PC-3 (cell line): ENCODE measurements at regions of chr14 and their contacts with region 1.

Region 1: GRCh38 chr14:24093901-24094761 is at the start of gene PCK2:
- DNase-seq: peak; percentile 84
- ATAC-seq: peak; percentile 88
- H3K4me3 ChIP-seq: peak within 1 kb of the TSS; percentile 83
- H3K27ac ChIP-seq: peak within 1 kb of the TSS; percentile 23
- H3K4me1 ChIP-seq: peaks cover 9% of the 10 kb centered on the region
- H3K27me3 ChIP-seq: no peaks in the 10 kb centered on the region
- CTCF ChIP-seq: no peak
- total RNA-seq, gene PCK2: 10.0 and 11.6 TPM in 2 replicates

Region 2: DNA sequence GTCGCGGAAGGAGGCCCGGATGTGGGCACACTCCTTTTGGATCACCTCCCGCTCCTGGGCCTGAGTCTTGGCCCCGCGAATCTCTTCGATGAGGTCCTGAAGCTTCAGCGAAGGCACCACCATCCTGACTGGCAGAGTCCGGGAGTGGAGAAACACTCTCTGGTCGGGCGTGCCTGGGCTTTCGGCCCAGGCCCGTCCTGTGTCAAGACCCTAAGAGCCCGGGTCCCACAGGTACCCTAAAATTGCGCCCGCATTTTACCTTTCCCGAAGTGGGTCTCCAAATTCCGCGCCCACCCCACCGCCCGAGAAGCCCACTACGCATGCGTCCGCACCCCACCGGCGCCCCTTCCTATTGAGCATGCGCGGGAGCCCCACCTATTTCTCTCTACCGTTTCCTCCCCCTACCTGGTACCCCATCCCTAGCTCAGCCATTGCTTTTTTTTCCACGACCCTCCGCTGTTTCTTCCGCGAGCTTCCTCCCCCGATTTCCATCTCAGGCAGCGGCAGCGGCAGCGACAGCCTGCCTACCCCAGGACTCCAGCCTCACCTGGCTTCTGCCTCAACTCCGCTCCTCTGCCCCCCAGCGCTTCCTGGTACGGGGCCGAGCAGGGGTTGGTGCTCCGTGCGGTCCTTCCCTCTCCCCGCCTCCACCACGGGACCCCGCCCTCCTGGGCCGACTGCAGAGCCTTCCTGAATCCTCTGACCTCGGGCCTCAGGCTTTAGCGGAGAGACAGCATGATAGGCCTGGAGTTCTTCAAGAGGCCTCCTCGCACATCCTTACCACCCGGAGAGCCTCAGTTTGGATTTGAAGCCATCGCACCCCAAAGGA is 526.7 kb before region 1 on chr14 and contains the start of gene AP1G2:
- CTCF ChIA-PET with region 1: no interaction called
- POLR2A ChIA-PET with region 1: interaction called, 26 read pairs
- intact Hi-C with region 1: no loop called
- DNase-seq: peak; percentile 78
- ATAC-seq: peak; percentile 70
- H3K4me3 ChIP-seq: peak within 1 kb of the TSS; percentile 81
- H3K27ac ChIP-seq: peak within 1 kb of the TSS; percentile 45
- H3K4me1 ChIP-seq: peaks cover 20% of the 10 kb centered on the region
- H3K27me3 ChIP-seq: no peaks in the 10 kb centered on the region
- CTCF ChIP-seq: no peak
- total RNA-seq, gene AP1G2: 69.7 and 71.7 TPM in 2 replicates

Region 3: DNA sequence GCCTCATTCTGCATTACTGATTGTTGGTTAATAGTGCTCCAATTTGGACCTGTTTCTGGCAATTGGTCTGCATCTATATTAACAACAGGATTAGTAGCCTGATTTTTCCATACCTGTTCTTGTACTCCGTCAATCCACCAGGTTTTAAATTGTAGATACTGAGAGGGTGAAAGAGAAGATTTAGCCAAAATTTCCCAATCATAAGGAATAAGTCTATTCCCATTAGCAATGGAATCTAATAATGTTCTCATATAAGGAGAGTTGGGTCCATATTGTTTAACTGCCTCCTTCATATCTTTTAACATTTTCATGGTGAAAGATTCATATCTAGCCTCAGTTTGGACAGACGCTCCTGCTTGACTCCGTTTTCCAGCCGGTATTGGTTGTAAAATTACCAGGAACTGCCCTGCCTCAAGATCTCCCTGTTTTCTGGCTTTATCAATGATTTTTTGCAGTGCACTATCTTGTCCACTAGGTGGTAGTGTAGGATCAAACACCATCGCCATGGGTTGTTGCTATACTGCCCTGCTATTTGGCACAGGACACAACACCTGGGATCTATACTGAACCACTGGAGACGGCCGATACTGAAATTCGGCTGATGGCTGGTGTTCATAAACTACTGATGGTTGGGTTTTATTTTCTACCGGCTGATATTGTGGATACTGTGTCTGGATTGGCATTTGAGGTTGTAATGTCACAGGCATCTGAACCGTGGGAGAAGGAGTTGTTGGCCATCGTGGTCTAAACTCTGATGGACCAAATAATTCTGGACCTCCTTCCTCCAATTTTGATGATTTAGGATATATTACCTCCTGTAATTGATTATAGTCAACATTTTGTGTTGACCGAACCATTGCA is 80.2 kb before region 1 on chr14:
- CTCF ChIA-PET with region 1: no interaction called
- POLR2A ChIA-PET with region 1: no interaction called
- intact Hi-C with region 1: loop called (anchors 2 kb)
- DNase-seq: peak; percentile 89
- ATAC-seq: peak; percentile 95
- H3K4me3 ChIP-seq: no peak overlapping the region
- H3K27ac ChIP-seq: no peak overlapping the region
- H3K4me1 ChIP-seq: no peaks in the 10 kb centered on the region
- H3K27me3 ChIP-seq: no peaks in the 10 kb centered on the region
- CTCF ChIP-seq: peak; percentile 83

Region 4: DNA sequence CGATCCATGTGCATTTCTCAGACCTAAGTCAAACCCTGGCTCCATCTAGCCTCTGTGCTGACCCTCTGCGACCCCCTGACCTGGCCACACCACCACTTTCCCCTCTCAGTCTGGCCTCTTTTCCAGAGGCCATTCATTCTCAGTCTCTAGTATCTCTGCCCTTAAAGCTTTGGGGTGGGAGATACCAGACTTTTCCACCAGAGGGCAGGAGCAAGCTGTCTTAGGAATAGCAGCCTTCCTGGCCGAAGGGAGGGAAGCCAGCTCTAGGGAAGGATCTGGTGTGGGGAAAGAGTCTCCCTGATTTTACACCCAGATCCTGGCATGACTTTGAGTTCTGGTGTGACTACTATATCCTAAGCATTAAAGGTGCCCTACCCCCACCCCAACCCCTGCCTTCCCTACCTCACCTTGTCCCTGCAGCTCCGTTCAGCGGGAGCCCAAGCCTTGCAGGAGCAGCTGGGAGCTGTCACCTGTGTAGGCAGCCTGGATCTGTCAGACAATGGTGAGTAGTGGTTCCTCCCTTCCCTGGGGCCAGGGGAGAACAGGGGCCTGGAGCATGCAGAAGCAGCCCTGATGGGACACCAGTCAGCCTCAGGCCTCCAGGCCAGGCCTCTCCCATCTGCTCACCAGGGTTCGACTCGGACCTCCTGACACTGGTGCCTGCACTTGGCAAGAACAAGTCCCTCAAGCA is 35.7 kb before region 1 on chr14:
- CTCF ChIA-PET with region 1: interaction called, 22 read pairs
- POLR2A ChIA-PET with region 1: interaction called, 5 read pairs
- intact Hi-C with region 1: loop called (anchors 1 kb)
- DNase-seq: peak; percentile 84
- ATAC-seq: peak; percentile 94
- H3K4me3 ChIP-seq: no peak overlapping the region
- H3K27ac ChIP-seq: no peak overlapping the region
- H3K4me1 ChIP-seq: no peaks in the 10 kb centered on the region
- H3K27me3 ChIP-seq: 0 out of 2 replicates have a peak, but pooled peaks cover 6% of the 10 kb centered on the region
- CTCF ChIP-seq: peak; percentile 84

Region 5: GRCh38 chr14:24068711-24069410 is 25.3 kb before region 1 on chr14:
- CTCF ChIA-PET with region 1: interaction called, 10 read pairs
- POLR2A ChIA-PET with region 1: no interaction called
- intact Hi-C with region 1: no loop called
- DNase-seq: no peak
- ATAC-seq: no peak
- H3K4me3 ChIP-seq: no peak overlapping the region
- H3K27ac ChIP-seq: no peak overlapping the region
- H3K4me1 ChIP-seq: no peaks in the 10 kb centered on the region
- H3K27me3 ChIP-seq: peaks cover 14% of the 10 kb centered on the region; the same call in 1 of the 2 replicates
- CTCF ChIP-seq: no peak

Region 6: DNA sequence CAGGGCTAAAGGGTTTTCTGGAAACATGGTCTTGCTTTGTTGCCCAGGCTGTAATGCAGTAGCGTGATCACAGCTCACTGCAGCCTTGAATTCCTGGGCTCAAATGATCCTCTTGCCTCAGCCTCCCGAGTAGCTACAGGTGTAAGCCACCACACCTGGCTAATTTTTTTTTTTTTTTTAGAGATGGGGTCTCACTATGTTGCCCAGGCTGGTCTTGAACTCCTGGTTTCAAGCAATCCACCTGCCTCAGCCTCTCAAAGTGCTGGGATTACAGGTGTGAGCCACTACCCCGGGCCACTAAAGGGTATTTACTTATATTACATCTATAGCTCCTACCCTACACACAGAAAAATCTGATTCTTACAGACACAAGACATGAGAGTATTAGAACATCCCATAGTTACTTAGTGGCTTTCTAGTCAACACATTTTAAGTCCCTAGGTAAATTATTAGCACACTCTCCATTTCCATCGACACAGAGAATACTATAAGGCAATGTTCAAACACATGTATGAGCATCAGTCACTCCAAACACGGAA is 14.3 kb after region 1 on chr14:
- CTCF ChIA-PET with region 1: interaction called, 18 read pairs
- POLR2A ChIA-PET with region 1: interaction called, 5 read pairs
- intact Hi-C with region 1: loop called (anchors 1 kb)
- DNase-seq: no peak
- ATAC-seq: no peak; the same call in 1 of the 2 replicates
- H3K4me3 ChIP-seq: no peak overlapping the region
- H3K27ac ChIP-seq: no peak overlapping the region
- H3K4me1 ChIP-seq: peaks cover 9% of the 10 kb centered on the region
- H3K27me3 ChIP-seq: no peaks in the 10 kb centered on the region
- CTCF ChIP-seq: no peak

Region 7: GRCh38 chr14:24141097-24141880 is 47.2 kb after region 1 on chr14 and contains the start of gene EMC9:
- CTCF ChIA-PET with region 1: no interaction called
- POLR2A ChIA-PET with region 1: interaction called, 5 read pairs
- intact Hi-C with region 1: loop called (anchors 2 kb)
- DNase-seq: peak; percentile 99
- ATAC-seq: peak; percentile 85
- H3K4me3 ChIP-seq: peak within 1 kb of the TSS; percentile 91
- H3K27ac ChIP-seq: peak within 1 kb of the TSS; percentile 33
- H3K4me1 ChIP-seq: peaks cover 30% of the 10 kb centered on the region
- H3K27me3 ChIP-seq: no peaks in the 10 kb centered on the region
- CTCF ChIP-seq: no peak
- total RNA-seq, gene EMC9: 30.1 and 36.7 TPM in 2 replicates

Region 8: GRCh38 chr14:24188251-24189058 is 94.3 kb after region 1 on chr14 and contains the start of gene IPO4:
- CTCF ChIA-PET with region 1: no interaction called
- POLR2A ChIA-PET with region 1: no interaction called
- intact Hi-C with region 1: no loop called
- DNase-seq: peak; percentile 98
- ATAC-seq: peak; percentile 90
- H3K4me3 ChIP-seq: peak within 1 kb of the TSS; percentile 76
- H3K27ac ChIP-seq: peak within 1 kb of the TSS; percentile 64
- H3K4me1 ChIP-seq: peaks cover 8% of the 10 kb centered on the region
- H3K27me3 ChIP-seq: no peaks in the 10 kb centered on the region
- CTCF ChIP-seq: no peak
- total RNA-seq, gene IPO4: 193 and 211 TPM in 2 replicates